Sigmoid colon (tissue), 7 donors: ENCODE measurements at regions of chr12 and their contacts with region 1.

Region 1: DNA sequence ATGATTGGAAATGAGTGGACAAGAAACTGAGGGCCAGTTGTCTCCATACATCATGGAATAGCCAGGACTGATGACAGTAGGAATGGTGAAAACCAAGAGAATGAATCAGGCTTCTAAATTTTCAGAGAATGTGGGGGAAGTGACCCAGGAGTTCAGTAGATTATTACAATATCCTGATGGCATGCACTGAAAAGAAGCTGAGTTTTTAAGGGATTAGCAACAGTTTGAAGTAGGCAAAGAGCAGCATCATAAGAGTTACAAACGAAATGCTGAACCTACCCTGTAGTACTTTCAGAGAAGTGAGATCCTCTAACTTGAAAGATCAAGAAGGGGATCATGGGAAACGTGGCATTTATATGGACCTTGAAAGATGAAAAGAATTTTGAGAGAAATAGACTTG is 13.2 kb downstream of the SLC2A14 start:
- DNase-seq: no peak
- H3K4me3 ChIP-seq: no peak overlapping the region
- H3K27ac ChIP-seq: peak overlapping the region in 2 of 4 donors; percentile 84 to 85
- H3K4me1 ChIP-seq: peaks cover 0 to 12% (median 10%) of the 10 kb centered on the region in 4 donors
- H3K27me3 ChIP-seq: no peaks in the 10 kb centered on the region
- CTCF ChIP-seq: no peak
- EP300 ChIP-seq: no peak
- POLR2A ChIP-seq: no peak

Region 2: GRCh38 chr12:7899755-7900154 is 40.2 kb after region 1 on chr12:
- intact Hi-C with region 1: no loop called
- DNase-seq: no peak
- H3K4me3 ChIP-seq: no peak overlapping the region
- H3K27ac ChIP-seq: no peak overlapping the region
- H3K4me1 ChIP-seq: no peaks in the 10 kb centered on the region
- H3K27me3 ChIP-seq: no peaks in the 10 kb centered on the region
- CTCF ChIP-seq: no peak
- EP300 ChIP-seq: no peak
- POLR2A ChIP-seq: no peak

Region 3: GRCh38 chr12:7995266-7995963 is 135.9 kb after region 1 on chr12:
- intact Hi-C with region 1: loop called (anchors 1 kb)
- DNase-seq: peak; percentile 92
- H3K4me3 ChIP-seq: no peak overlapping the region
- H3K27ac ChIP-seq: peak overlapping the region in 3 of 4 donors; percentile 21 to 55 (median 52)
- H3K4me1 ChIP-seq: no peaks in the 10 kb centered on the region
- H3K27me3 ChIP-seq: no peaks in the 10 kb centered on the region
- CTCF ChIP-seq: peak; percentile 78 to 81 (median 81)
- EP300 ChIP-seq: no peak
- POLR2A ChIP-seq: no peak